ENCODE measurements at regions of chr20 and their contacts with region 1.

Region 1: GRCh38 chr20:48828022-48828743 is 384 bp upstream of the PREX1 start:
- DNase-seq: peak; percentile 96
- H3K4me3 Mint-ChIP-seq: peak overlapping the region; percentile 88
- H3K27ac Mint-ChIP-seq: peak overlapping the region; percentile 92
- H3K4me1 Mint-ChIP-seq: peaks cover 47% of the 10 kb centered on the region
- H3K27me3 Mint-ChIP-seq: peaks cover 11% of the 10 kb centered on the region

Region 2: GRCh38 chr20:48718857-48719578 is 109.2 kb before region 1 on chr20:
- intact Hi-C with region 1: loop called (anchors 1 kb)
- DNase-seq: peak; percentile 80
- H3K4me3 Mint-ChIP-seq: peak overlapping the region; percentile 76
- H3K27ac Mint-ChIP-seq: peak overlapping the region; percentile 81
- H3K4me1 Mint-ChIP-seq: peaks cover 80% of the 10 kb centered on the region
- H3K27me3 Mint-ChIP-seq: no peaks in the 10 kb centered on the region

Region 3: GRCh38 chr20:48760403-48760983 is 67.7 kb before region 1 on chr20:
- intact Hi-C with region 1: loop called (anchors 2 kb)
- DNase-seq: peak; percentile 93
- H3K4me3 Mint-ChIP-seq: peak overlapping the region; percentile 75
- H3K27ac Mint-ChIP-seq: peak overlapping the region; percentile 97
- H3K4me1 Mint-ChIP-seq: peaks cover 76% of the 10 kb centered on the region
- H3K27me3 Mint-ChIP-seq: no peaks in the 10 kb centered on the region

Region 4: DNA sequence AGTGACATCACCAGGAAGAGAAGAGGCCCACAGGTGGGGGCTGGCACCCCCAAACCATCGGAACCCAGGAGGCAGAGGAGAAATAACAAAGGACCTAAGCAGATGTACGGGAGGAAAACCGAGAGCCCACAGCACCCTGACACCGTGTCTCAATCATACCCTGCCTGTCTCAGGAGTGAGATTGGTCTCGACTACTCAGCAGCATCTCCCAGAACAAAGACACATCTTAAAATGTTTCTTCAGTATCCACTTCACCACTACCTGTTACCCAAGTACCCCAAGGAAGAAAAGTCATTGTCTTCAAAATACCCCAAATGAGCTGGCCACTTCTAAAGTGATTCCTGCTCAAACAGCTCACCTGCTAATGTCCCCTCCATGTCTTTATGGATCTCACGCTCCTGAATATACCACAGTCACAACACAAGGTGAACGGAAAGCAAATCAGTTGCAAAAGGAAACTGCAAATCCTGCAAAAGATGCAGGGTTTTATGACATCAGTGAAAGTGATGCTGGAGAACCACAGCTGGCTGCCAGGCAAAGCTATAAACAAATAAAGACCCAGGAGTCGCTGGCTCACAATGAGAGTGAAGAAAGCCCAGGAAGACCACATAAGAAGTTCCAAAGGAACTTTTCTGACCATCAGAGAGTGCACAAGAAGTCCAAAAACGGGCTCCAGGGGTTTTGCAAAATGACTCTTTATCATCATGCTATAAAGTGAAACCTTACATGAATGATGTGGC is 44.5 kb before region 1 on chr20:
- intact Hi-C with region 1: loop called (anchors 1 kb)
- DNase-seq: peak; percentile 87
- H3K4me3 Mint-ChIP-seq: no peak overlapping the region
- H3K27ac Mint-ChIP-seq: no peak overlapping the region
- H3K4me1 Mint-ChIP-seq: peaks cover 38% of the 10 kb centered on the region
- H3K27me3 Mint-ChIP-seq: no peaks in the 10 kb centered on the region

Region 5: DNA sequence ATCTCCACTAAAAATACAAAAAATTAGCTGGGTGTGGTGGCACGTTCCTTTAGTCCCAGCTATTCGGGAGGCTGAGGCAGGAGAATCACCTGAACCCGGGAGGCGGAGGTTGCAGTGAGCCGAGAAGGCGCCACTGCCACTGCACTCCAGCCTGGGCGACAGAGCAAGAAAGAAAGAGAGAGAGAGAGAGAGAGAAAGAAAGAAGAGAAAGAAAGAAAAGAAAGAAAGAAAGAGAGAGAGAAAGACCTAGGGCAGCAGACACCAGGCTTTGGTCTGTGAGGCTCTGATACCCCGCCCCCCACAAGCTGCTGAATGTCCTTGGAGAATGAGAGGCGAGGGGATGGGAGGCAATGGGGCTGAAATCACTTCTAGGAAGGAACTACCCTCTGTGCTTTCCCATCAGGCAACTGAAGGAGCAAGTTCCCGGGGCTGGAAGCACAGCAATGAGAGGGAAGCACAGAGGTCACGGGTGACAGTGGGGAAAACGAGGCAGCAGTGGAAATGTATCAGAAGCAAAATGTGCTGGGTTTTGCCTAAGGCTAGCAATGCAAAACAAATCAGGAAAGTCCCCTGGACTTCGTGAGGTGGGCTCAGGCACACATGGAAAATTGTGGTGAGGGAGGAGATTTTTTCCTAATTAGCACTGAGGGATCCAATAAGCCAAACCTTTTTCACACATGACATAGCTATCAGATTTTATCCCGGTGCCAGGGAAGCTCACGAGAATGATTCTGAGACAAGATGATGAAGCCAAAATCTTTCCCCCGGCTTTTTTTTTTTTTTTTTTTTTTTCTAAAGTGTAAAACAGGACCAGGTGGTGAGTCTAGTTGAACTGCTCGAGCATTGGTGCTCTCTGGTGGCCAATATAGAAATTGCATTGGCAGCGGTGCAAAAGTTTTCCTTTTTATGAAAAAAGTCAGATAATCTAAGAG is 76.4 kb after region 1 on chr20:
- intact Hi-C with region 1: loop called (anchors 5 kb)
- DNase-seq: peak; percentile 91
- H3K4me3 Mint-ChIP-seq: no peak overlapping the region
- H3K27ac Mint-ChIP-seq: no peak overlapping the region
- H3K4me1 Mint-ChIP-seq: peaks cover 9% of the 10 kb centered on the region
- H3K27me3 Mint-ChIP-seq: peaks cover 4% of the 10 kb centered on the region

Region 6: GRCh38 chr20:49046087-49046900 is 218.1 kb after region 1 on chr20 and contains the start of gene CSE1L:
- intact Hi-C with region 1: loop called (anchors 10 kb)
- DNase-seq: peak; percentile 99
- H3K4me3 Mint-ChIP-seq: peak within 1 kb of the TSS; percentile 99
- H3K27ac Mint-ChIP-seq: peak within 1 kb of the TSS; percentile 100
- H3K4me1 Mint-ChIP-seq: peaks cover 28% of the 10 kb centered on the region
- H3K27me3 Mint-ChIP-seq: no peaks in the 10 kb centered on the region
- total RNA-seq, gene CSE1L: 135 and 136 TPM in 2 replicates